Left lung (tissue), 14 donors: ENCODE measurements at regions of chr6 and their contacts with region 1.

Region 1: DNA sequence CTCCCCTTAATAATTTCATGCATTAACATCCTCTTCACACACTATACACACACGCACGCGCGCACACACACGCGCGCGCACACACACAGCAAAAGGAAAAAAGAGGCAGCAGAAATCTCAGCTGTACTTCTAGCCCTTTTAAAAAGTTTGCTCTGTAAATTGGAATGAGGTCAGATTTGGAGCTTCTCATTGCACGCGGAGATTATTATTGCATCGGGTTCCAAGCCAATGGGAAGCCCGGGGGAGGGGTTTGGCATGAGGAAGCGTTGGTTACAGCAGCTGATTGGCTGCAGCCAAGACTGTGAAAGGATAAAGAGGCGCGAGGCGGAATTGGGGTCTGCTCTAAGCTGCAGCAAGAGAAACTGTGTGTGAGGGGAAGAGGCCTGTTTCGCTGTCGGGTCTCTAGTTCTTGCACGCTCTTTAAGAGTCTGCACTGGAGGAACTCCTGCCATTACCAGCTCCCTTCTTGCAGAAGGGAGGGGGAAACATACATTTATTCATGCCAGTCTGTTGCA is at the start of gene SOX4:
- DNase-seq: peak; percentile 84 to 99 (median 98)
- ATAC-seq: peak; percentile 75
- H3K4me3 ChIP-seq: peak within 1 kb of the TSS; percentile 63 to 74
- H3K27ac ChIP-seq: peak within 1 kb of the TSS; percentile 91 to 93
- H3K4me1 ChIP-seq: peaks cover 3 to 36% of the 10 kb centered on the region in 2 donors
- H3K27me3 ChIP-seq: peaks cover 0 to 4% of the 10 kb centered on the region in 2 donors
- CTCF ChIP-seq: no peak
- polyA plus RNA-seq, gene SOX4: 90.2 to 119 (median 109) TPM

Region 2: GRCh38 chr6:20564269-20564668 is 1029.2 kb before region 1 on chr6:
- intact Hi-C with region 1: loop called in 1 of 2 experiments (anchors 10 kb)
- DNase-seq: peak in 1 of 4 donors; percentile 19
- ATAC-seq: peak; percentile 49
- H3K4me3 ChIP-seq: no peak overlapping the region
- H3K27ac ChIP-seq: no peak overlapping the region
- H3K4me1 ChIP-seq: no peaks in the 10 kb centered on the region
- H3K27me3 ChIP-seq: no peaks in the 10 kb centered on the region
- CTCF ChIP-seq: peak; percentile 48 to 54

Region 3: GRCh38 chr6:20791944-20792343 is 801.5 kb before region 1 on chr6:
- intact Hi-C with region 1: loop called in 1 of 2 experiments (anchors 10 kb)
- DNase-seq: peak in 2 of 4 donors; percentile 17 to 36
- ATAC-seq: no peak
- H3K4me3 ChIP-seq: no peak overlapping the region
- H3K27ac ChIP-seq: no peak overlapping the region
- H3K4me1 ChIP-seq: no peaks in the 10 kb centered on the region
- H3K27me3 ChIP-seq: no peaks in the 10 kb centered on the region
- CTCF ChIP-seq: no peak

Region 4: DNA sequence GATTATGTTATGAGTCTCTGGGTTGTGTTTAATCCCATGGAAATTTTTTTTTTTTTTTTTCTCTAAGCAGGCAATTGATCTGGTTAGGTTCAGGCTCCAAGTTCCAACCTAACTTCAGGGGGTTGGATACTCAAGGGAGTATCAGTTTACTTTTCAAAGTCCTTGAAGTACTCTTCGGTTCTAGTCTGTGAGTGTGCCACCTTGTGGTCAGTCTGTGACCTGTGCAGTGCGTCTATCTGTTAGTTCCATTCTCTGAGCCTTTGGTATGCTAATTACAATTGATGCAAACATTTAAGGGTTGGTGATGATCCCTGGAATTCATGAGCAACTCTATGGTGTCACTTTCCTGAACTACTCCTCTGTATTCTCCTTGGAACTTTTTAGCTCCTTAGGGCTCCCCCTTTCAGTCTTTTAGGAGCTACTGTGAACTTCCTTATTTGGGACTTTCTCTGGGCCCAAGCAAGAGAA is 342.1 kb after region 1 on chr6:
- intact Hi-C with region 1: loop called in 1 of 2 experiments (anchors 10 kb)
- DNase-seq: peak in 1 of 4 donors; percentile 42
- ATAC-seq: peak; percentile 88
- H3K4me3 ChIP-seq: no peak overlapping the region
- H3K27ac ChIP-seq: no peak overlapping the region
- H3K4me1 ChIP-seq: no peaks in the 10 kb centered on the region
- H3K27me3 ChIP-seq: no peaks in the 10 kb centered on the region
- CTCF ChIP-seq: peak; percentile 48 to 60

Region 5: DNA sequence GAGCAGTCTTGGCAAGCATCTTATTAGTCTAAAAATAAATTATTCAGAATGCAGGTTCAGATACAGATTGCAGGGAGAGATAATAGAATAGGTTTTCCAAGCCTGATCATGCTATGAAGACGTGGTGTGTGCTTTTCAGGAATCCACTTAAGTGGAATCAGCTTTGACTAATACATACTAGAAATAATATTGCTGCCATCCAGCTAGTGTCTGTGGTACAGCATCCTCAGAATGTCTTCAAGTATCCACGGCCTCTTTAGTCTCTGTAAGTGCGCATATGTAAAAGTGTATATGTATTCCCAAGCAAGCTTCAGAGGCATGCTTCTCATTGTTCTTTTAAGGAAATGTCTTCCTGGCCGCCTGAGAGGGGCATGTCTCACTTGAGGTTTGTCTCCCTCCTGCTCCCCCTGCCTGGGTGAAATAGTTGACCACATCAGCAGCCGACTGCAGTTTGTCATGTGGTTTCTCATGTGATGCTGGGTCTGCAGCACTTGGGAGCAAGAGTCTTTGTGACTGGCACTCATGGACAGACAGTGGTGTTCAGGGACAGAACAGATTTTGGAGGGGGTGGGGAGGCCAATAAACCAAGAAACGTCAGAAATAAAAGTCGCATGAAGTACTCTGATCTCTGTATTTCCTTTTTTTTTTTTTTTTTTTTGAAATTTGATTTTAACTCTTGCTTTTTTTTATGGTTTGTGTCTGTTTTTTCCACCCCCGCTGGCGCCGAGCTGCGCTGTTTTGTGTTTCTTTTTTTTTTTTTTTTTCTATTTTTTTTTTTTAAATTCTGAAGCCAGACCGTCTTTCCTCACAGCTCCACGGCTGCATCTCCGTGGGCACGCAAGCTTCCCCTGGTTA is 552.6 kb after region 1 on chr6:
- intact Hi-C with region 1: loop called in 1 of 2 experiments (anchors 5 kb)
- DNase-seq: peak in 3 of 4 donors; percentile 33 to 73 (median 49)
- ATAC-seq: peak; percentile 27
- H3K4me3 ChIP-seq: no peak overlapping the region
- H3K27ac ChIP-seq: no peak overlapping the region
- H3K4me1 ChIP-seq: peaks cover 5 to 12% of the 10 kb centered on the region in 2 donors
- H3K27me3 ChIP-seq: peaks cover 0 to 10% of the 10 kb centered on the region in 2 donors
- CTCF ChIP-seq: peak in 1 of 2 donors; percentile 14